Prostate gland (tissue), 2 donors: ENCODE measurements at regions of chr2 and their contacts with region 1.

Region 1: GRCh38 chr2:45169339-45170190 is 160.3 kb upstream of the SIX2 start:
- DNase-seq: no peak
- H3K4me3 ChIP-seq: peak overlapping the region; percentile 28 to 41
- H3K27ac ChIP-seq: peak overlapping the region; percentile 39 to 50
- H3K4me1 ChIP-seq: peaks cover 3% of the 10 kb centered on the region
- H3K27me3 ChIP-seq: no peaks in the 10 kb centered on the region
- CTCF ChIP-seq: peak in 1 of 4 experiments; percentile 3
- POLR2A ChIP-seq: no peak

Region 2: DNA sequence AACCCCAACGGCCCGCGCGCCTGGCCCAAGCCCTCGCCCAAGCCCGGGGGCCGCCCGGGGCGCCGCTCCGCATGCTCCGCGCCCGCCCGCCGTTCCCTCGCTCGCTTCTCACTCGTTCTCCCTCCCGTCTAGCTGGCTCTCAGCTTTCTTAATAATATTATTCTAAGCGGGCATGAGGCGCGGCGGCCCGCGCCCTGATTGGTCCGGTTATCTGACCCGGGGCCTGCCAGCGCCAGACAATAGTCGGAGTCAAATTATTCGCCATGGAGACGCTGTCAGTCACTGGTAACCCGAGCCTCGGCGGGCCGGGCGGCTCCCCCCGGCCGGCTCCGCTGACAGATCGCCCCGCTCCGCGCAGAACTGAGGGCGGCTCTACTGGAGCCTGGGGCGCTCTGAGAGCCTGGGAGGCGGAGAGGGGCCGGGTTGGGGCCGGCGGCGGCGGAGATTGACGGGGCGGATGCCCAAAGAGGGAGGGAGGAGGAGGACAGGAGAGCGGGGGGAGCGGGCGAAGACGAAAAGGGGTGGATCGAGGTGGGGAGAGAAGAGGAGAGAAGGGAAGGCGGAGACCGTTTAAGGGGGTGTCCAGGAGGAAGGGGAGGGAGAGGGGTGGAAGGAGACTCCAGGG is 160.2 kb before region 1 on chr2 and contains the start of gene SIX2:
- intact Hi-C with region 1: loop called (anchors 2 kb)
- DNase-seq: peak; percentile 95
- H3K4me3 ChIP-seq: peak within 1 kb of the TSS; percentile 36 to 38
- H3K27ac ChIP-seq: peak within 1 kb of the TSS; percentile 29 to 69
- H3K4me1 ChIP-seq: peaks cover 9% of the 10 kb centered on the region
- H3K27me3 ChIP-seq: peaks cover 10% of the 10 kb centered on the region
- CTCF ChIP-seq: peak in 1 of 4 experiments; percentile 8
- POLR2A ChIP-seq: peak; percentile 47
- total RNA-seq, gene SIX2: 1.8 to 5.1 TPM

Region 3: GRCh38 chr2:45237850-45238542 is 68.4 kb after region 1 on chr2:
- intact Hi-C with region 1: no loop called
- DNase-seq: no peak
- H3K4me3 ChIP-seq: no peak overlapping the region
- H3K27ac ChIP-seq: no peak overlapping the region
- H3K4me1 ChIP-seq: peaks cover 3% of the 10 kb centered on the region
- H3K27me3 ChIP-seq: no peaks in the 10 kb centered on the region
- CTCF ChIP-seq: peak in 1 of 4 experiments; percentile 14
- POLR2A ChIP-seq: no peak

Region 4: GRCh38 chr2:45391866-45392265 is 222.3 kb after region 1 on chr2:
- intact Hi-C with region 1: no loop called
- DNase-seq: no peak
- H3K4me3 ChIP-seq: no peak overlapping the region
- H3K27ac ChIP-seq: no peak overlapping the region
- H3K4me1 ChIP-seq: no peaks in the 10 kb centered on the region
- H3K27me3 ChIP-seq: no peaks in the 10 kb centered on the region
- CTCF ChIP-seq: no peak
- POLR2A ChIP-seq: no peak

Region 5: GRCh38 chr2:45458909-45459563 is 289.5 kb after region 1 on chr2:
- intact Hi-C with region 1: loop called (anchors 5 kb)
- DNase-seq: peak; percentile 63
- H3K4me3 ChIP-seq: no peak overlapping the region
- H3K27ac ChIP-seq: no peak overlapping the region
- H3K4me1 ChIP-seq: no peaks in the 10 kb centered on the region
- H3K27me3 ChIP-seq: no peaks in the 10 kb centered on the region
- CTCF ChIP-seq: no peak
- POLR2A ChIP-seq: no peak

Region 6: DNA sequence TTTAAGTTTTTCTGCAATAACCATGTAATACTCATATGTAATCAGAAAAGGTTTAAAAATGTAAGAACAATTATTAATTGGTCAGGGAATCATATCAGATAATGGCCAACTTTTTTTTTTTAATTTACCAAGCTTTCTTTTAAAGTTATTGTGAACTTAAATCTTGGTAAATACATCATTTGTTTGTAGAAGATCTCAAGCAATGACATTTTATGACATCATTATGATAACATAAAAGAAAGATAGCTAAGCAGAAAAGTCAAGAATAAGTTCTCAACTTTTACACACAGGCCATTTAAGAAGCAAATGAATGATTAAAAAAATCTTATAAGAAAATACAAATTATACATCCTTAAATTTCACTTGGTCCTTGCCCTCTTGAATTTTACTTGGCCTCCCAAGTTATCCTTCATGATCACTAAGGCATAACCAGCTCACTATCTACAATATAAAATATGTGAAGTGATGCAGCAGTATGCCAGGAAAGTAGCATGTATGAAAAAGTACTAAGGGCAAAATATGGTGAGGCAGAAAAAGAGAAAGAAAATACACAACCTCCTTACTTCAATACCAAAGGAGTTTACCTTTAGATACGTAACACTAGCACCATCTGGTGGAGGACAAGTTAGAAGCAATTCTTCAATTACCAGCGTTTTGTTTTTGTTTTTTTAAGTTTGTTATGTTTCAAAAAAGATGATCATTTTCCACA is 324.9 kb after region 1 on chr2:
- intact Hi-C with region 1: loop called (anchors 10 kb)
- DNase-seq: peak; percentile 32
- H3K4me3 ChIP-seq: no peak overlapping the region
- H3K27ac ChIP-seq: no peak overlapping the region
- H3K4me1 ChIP-seq: no peaks in the 10 kb centered on the region
- H3K27me3 ChIP-seq: no peaks in the 10 kb centered on the region
- CTCF ChIP-seq: peak; percentile 56 to 87 (median 82)
- POLR2A ChIP-seq: no peak